Gastrocnemius medialis (tissue), 4 donors: ENCODE measurements at regions of chr3 and their contacts with region 1.

Region 1: DNA sequence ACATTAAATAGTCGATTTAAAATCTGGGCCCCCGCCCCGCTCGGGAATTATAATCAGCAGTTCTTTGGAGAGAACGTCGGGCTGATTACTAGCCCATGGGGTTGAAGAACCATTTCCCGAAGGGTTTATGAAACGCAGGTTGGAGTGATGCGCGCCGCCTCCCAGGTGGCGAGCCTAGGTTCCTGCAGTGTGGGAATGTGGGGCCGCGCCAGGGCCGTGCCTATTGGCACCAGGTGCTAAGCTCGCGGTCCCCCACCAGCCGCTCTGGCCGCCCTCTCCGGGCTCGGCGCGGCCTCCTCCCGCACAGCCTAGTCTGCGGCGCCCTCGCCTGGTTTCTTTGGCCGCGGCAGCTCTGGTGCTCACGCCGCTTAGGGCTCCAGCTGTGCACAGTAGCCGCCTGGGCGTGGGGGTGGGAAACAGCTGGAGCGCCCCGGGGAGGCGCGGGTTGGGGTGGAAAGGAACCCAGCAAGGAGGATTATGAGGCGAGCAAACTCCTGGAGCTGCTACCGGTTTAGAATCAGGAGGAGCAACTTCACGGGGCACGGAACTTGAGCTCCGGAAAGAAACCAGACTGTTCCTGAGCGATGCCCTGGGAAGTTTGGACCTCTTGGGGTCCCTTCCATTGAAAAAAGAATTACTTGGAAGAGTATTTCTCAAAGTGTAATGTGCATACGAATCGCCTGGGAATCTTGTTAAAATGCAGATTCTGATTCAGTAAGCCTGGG is 5.6 kb upstream of the MECOM start:
- DNase-seq: peak; percentile 23 to 32
- ATAC-seq: peak; percentile 69 to 85
- H3K4me3 ChIP-seq: peak overlapping the region; percentile 41 to 57 (median 49)
- H3K27ac ChIP-seq: peak overlapping the region in 3 of 4 donors; percentile 67 to 71 (median 67)
- H3K4me1 ChIP-seq: peaks cover 11 to 18% of the 10 kb centered on the region in 2 donors
- H3K27me3 ChIP-seq: peaks cover 79 to 85% (median 85%) of the 10 kb centered on the region in 3 donors
- CTCF ChIP-seq: peak; percentile 28 to 77 (median 63)
- POLR2A ChIP-seq: no peak

Region 2: DNA sequence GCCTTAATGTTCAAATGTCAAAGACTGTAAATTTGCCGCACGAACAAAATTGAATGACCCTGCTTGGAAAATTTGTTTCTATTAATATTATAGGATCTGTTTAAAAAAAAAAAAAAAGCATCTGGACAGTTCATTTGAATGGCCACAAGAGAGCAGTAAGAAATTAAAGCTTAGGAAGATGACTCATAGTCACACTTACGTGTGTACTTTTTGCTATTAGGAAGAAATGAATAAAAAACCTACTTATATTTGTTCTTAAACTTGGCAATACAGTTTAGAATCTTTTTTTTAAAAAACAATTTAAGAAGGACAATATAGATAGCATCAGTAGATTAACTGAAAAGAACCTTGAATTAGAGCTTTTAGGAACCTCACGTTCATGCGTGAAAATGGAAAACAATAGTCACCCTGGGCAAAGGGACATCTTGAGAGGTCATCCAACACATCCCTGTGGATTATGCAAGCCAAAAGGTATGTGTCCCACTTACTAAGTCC is 627.4 kb before region 1 on chr3:
- in situ Hi-C with region 1: no loop called
- intact Hi-C with region 1: loop called (anchors 10 kb)
- DNase-seq: no peak
- ATAC-seq: peak; percentile 58 to 60
- H3K4me3 ChIP-seq: no peak overlapping the region
- H3K27ac ChIP-seq: peak overlapping the region in 2 of 4 donors; percentile 11 to 17
- H3K4me1 ChIP-seq: no peaks in the 10 kb centered on the region
- H3K27me3 ChIP-seq: no peaks in the 10 kb centered on the region
- CTCF ChIP-seq: peak in 3 of 5 experiments; percentile 24 to 41 (median 34)
- POLR2A ChIP-seq: no peak

Region 3: GRCh38 chr3:169173244-169174015 is 495.7 kb before region 1 on chr3:
- in situ Hi-C with region 1: loop called in 1 of 4 experiments (anchors 25 kb)
- intact Hi-C with region 1: no loop called
- DNase-seq: no peak
- ATAC-seq: no peak
- H3K4me3 ChIP-seq: no peak overlapping the region
- H3K27ac ChIP-seq: no peak overlapping the region
- H3K4me1 ChIP-seq: peaks cover 0 to 3% of the 10 kb centered on the region in 2 donors
- H3K27me3 ChIP-seq: no peaks in the 10 kb centered on the region
- CTCF ChIP-seq: no peak
- POLR2A ChIP-seq: no peak

Region 4: GRCh38 chr3:169218314-169218983 is 450.7 kb before region 1 on chr3:
- in situ Hi-C with region 1: no loop called
- intact Hi-C with region 1: loop called (anchors 10 kb)
- DNase-seq: no peak
- ATAC-seq: peak; percentile 41 to 56
- H3K4me3 ChIP-seq: no peak overlapping the region
- H3K27ac ChIP-seq: peak overlapping the region in 3 of 4 donors; percentile 3 to 20 (median 4)
- H3K4me1 ChIP-seq: no peaks in the 10 kb centered on the region
- H3K27me3 ChIP-seq: no peaks in the 10 kb centered on the region
- CTCF ChIP-seq: peak in 2 of 5 experiments; percentile 40 to 48
- POLR2A ChIP-seq: no peak